CD4-positive, alpha-beta memory T cell (primary cell): ENCODE measurements at regions of chr12 and their contacts with region 1.

Region 1: DNA sequence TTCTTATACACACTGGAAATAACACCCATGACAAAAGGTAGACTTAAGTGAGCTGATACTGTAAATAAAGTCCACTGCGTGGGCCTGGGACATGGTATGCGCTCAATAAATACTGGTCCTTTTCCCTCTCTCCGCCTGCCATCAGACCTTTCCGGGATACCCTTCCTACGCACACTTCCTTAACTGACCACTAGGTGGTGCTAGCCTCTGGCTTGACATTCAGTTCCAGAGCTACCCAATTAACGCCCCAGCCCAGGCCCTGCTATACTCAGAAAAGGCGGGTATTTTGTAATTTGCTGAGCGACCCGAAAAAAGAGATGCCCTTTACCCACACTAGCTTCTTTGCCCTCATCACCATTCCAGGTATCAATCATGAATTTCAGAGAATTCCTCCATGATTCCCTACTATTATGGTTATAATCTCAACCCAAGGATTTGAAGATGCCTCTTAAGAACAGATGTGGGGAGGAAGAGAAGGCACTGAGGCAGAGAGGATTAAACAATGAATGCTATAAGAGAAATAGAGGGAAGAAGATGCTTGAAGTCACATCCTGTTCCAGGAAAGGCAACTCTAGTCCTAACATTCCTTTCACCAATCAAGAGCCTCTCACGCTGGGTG is 3.9 kb upstream of the LRP1 start:
- DNase-seq: peak; percentile 73 to 78 (median 78)
- H3K4me3 ChIP-seq: no peak overlapping the region
- H3K4me3 Mint-ChIP-seq: peak overlapping the region in 1 of 8 donors; percentile 1
- H3K27ac ChIP-seq: no peak overlapping the region
- H3K27ac Mint-ChIP-seq: peak overlapping the region in 1 of 7 donors; percentile 43
- H3K4me1 ChIP-seq: peaks cover 8% of the 10 kb centered on the region
- H3K4me1 Mint-ChIP-seq: peaks cover 2 to 10% (median 6%) of the 10 kb centered on the region in 4 donors
- H3K27me3 ChIP-seq: no peaks in the 10 kb centered on the region
- H3K27me3 Mint-ChIP-seq: no peaks in the 10 kb centered on the region

Region 2: GRCh38 chr12:57063991-57064685 is 60.2 kb before region 1 on chr12:
- CTCF ChIA-PET with region 1: interaction called, 28 read pairs
- POLR2A ChIA-PET with region 1: interaction called, 4 read pairs
- intact Hi-C with region 1: no loop called
- DNase-seq: peak; percentile 77 to 88 (median 84)
- H3K4me3 ChIP-seq: peak overlapping the region; percentile 5 to 24
- H3K4me3 Mint-ChIP-seq: peak overlapping the region; percentile 73 to 85 (median 82)
- H3K27ac ChIP-seq: peak overlapping the region; percentile 74
- H3K27ac Mint-ChIP-seq: peak overlapping the region; percentile 79 to 99 (median 96)
- H3K4me1 ChIP-seq: peaks cover 30% of the 10 kb centered on the region
- H3K4me1 Mint-ChIP-seq: peaks cover 15 to 33% (median 20%) of the 10 kb centered on the region in 4 donors
- H3K27me3 ChIP-seq: no peaks in the 10 kb centered on the region
- H3K27me3 Mint-ChIP-seq: no peaks in the 10 kb centered on the region

Region 3: GRCh38 chr12:57078519-57079404 is 45.6 kb before region 1 on chr12 and contains the start of gene NEMP1:
- CTCF ChIA-PET with region 1: interaction called, 23 read pairs
- POLR2A ChIA-PET with region 1: interaction called, 4 read pairs
- intact Hi-C with region 1: no loop called
- DNase-seq: peak; percentile 94 to 100 (median 99)
- H3K4me3 ChIP-seq: peak within 1 kb of the TSS; percentile 73 to 94
- H3K4me3 Mint-ChIP-seq: peak within 1 kb of the TSS; percentile 92 to 98 (median 94)
- H3K27ac ChIP-seq: peak within 1 kb of the TSS; percentile 75
- H3K27ac Mint-ChIP-seq: peak within 1 kb of the TSS; percentile 86 to 98 (median 96)
- H3K4me1 ChIP-seq: peaks cover 18% of the 10 kb centered on the region
- H3K4me1 Mint-ChIP-seq: peaks cover 10 to 37% (median 18%) of the 10 kb centered on the region in 4 donors
- H3K27me3 ChIP-seq: no peaks in the 10 kb centered on the region
- H3K27me3 Mint-ChIP-seq: no peaks in the 10 kb centered on the region
- total RNA-seq, gene NEMP1: 27.2 TPM

Region 4: DNA sequence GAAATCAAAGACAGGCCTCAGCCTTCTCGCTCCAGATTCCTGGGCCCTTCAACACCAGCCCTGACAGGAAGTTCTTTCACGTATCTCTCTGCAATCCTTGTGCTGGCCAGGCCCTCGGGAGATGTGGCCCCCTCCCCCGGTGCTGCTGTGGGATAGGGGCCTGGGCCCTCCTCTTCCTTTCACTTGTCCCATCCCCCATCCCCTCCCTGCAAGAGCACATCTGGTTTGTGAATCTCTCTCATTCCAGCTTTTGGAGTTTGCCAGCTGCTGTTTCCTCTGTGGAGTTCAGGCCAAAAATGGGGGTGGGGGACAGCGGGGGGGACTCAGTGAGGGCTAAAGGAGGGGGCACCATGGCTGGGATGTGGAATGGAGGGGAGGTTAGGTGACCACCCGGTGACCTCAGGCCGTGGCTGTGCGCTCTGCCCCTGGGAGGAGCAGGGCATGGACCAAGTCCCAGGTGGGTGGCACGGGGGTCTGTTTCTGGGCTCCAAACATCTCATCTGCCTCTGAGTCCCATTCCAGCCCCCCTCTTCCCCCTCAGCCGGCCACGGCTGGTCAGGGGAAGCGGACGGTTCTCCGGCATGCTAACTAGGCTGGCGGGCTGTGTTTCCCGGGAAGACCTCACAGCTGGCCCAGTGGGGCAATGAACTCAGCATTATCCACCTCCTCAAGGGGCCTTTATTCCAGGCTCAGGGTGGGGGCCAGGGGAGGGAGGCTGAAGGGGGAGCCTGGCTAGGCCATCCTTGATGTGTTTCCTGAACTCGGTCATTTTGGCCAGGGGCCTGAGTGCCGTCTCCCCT is 11.4 kb after region 1 on chr12:
- CTCF ChIA-PET with region 1: interaction called, 15 read pairs
- POLR2A ChIA-PET with region 1: no interaction called
- intact Hi-C with region 1: no loop called
- DNase-seq: no peak
- H3K4me3 ChIP-seq: no peak overlapping the region
- H3K4me3 Mint-ChIP-seq: no peak overlapping the region
- H3K27ac ChIP-seq: no peak overlapping the region
- H3K27ac Mint-ChIP-seq: no peak overlapping the region
- H3K4me1 ChIP-seq: no peaks in the 10 kb centered on the region
- H3K4me1 Mint-ChIP-seq: peaks cover 0 to 8% (median 3%) of the 10 kb centered on the region in 4 donors
- H3K27me3 ChIP-seq: no peaks in the 10 kb centered on the region
- H3K27me3 Mint-ChIP-seq: no peaks in the 10 kb centered on the region

Region 5: DNA sequence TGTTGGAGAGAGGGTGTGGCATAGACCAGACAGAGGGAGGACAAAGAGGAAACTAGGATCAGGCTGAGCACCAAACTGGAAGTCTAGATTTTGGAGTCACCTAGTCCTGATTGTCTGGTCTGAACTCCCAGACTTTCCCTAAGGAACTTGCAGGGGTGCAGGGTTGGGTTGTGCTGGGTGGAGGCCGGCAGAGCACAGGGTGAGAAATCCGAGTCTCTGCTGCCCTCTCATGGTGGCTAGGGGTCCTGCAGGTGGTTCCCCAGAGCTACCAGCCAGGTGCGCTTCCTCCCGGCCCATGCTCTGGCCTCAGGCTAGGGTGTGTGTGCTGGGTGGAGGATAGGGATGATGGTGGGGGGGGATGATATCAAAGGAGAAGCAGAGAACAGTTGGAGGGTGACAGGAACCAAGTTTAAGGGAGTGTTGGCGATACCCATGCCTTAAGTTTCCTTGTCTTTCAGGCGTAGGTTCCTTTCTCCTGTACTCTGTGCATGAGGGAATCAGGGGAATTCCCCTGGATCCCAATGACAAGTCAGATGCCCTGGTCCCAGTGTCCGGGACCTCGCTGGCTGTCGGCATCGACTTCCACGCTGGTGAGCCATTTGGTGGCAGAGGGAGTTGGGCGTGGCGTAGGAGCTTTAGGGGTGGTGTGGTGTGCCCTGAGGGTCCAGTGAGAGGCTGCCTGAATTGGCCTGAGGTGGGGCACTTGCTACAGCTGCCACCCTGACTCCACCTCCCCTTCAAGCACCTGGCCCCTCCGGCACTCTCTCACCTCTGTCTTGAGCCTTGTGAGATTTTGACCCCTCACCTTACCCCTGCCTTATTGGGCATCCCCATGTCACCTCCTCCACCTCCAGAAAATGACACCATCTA is 58.8 kb after region 1 on chr12:
- CTCF ChIA-PET with region 1: interaction called, 207 read pairs
- POLR2A ChIA-PET with region 1: interaction called, 11 read pairs
- intact Hi-C with region 1: loop called (anchors 1 kb)
- DNase-seq: peak; percentile 71 to 75 (median 73)
- H3K4me3 ChIP-seq: no peak overlapping the region
- H3K4me3 Mint-ChIP-seq: peak overlapping the region in 1 of 8 donors; percentile 25
- H3K27ac ChIP-seq: no peak overlapping the region
- H3K27ac Mint-ChIP-seq: peak overlapping the region in 1 of 7 donors; percentile 70
- H3K4me1 ChIP-seq: no peaks in the 10 kb centered on the region
- H3K4me1 Mint-ChIP-seq: peaks cover 2 to 7% (median 5%) of the 10 kb centered on the region in 4 donors
- H3K27me3 ChIP-seq: no peaks in the 10 kb centered on the region
- H3K27me3 Mint-ChIP-seq: peaks cover 0 to 2% of the 10 kb centered on the region in 2 donors